ENCODE measurements at regions of chr1 and their contacts with region 1.

Region 1: GRCh38 chr1:42941640-42942330 is 16.9 kb downstream of the SLC2A1 start:
- DNase-seq: peak; percentile 79
- H3K4me3 ChIP-seq: no peak overlapping the region
- H3K27ac ChIP-seq: peak overlapping the region; percentile 98
- H3K4me1 ChIP-seq: peaks cover 47% of the 10 kb centered on the region
- H3K27me3 ChIP-seq: no peaks in the 10 kb centered on the region
- CTCF ChIP-seq: no peak
- POLR2A ChIP-seq: no peak

Region 2: GRCh38 chr1:42952303-42953001 is 10.7 kb after region 1 on chr1:
- CTCF ChIA-PET with region 1: interaction called, 14 read pairs
- POLR2A ChIA-PET with region 1: no interaction called
- dilution Hi-C with region 1: no loop called
- intact Hi-C with region 1: no loop called
- DNase-seq: no peak
- H3K4me3 ChIP-seq: no peak overlapping the region
- H3K27ac ChIP-seq: no peak overlapping the region
- H3K4me1 ChIP-seq: peaks cover 17% of the 10 kb centered on the region
- H3K27me3 ChIP-seq: no peaks in the 10 kb centered on the region
- CTCF ChIP-seq: no peak
- POLR2A ChIP-seq: no peak

Region 3: GRCh38 chr1:42958488-42959319 is 16.9 kb after region 1 on chr1 and contains the start of gene SLC2A1:
- CTCF ChIA-PET with region 1: interaction called, 14 read pairs
- POLR2A ChIA-PET with region 1: no interaction called
- dilution Hi-C with region 1: no loop called
- intact Hi-C with region 1: loop called (anchors 1 kb)
- DNase-seq: peak; percentile 94
- H3K4me3 ChIP-seq: peak within 1 kb of the TSS; percentile 43 to 79 (median 57)
- H3K27ac ChIP-seq: peak within 1 kb of the TSS; percentile 68
- H3K4me1 ChIP-seq: peaks cover 16% of the 10 kb centered on the region
- H3K27me3 ChIP-seq: no peaks in the 10 kb centered on the region
- CTCF ChIP-seq: no peak
- POLR2A ChIP-seq: peak; percentile 73
- total RNA-seq, gene SLC2A1: 38.7 and 42.2 TPM in 2 replicates

Region 4: GRCh38 chr1:43206600-43207228 is 264.9 kb after region 1 on chr1:
- CTCF ChIA-PET with region 1: no interaction called
- POLR2A ChIA-PET with region 1: no interaction called
- dilution Hi-C with region 1: no loop called
- intact Hi-C with region 1: loop called (anchors 1 kb)
- DNase-seq: no peak
- H3K4me3 ChIP-seq: peak overlapping the region in 1 of 3 experiments; percentile 7
- H3K27ac ChIP-seq: peak overlapping the region; percentile 97
- H3K4me1 ChIP-seq: peaks cover 27% of the 10 kb centered on the region
- H3K27me3 ChIP-seq: no peaks in the 10 kb centered on the region
- CTCF ChIP-seq: no peak
- POLR2A ChIP-seq: peak; percentile 92

Measured in endothelial cell of umbilical vein (primary cell).